Heart left ventricle (tissue), 16 donors: ENCODE measurements at regions of chr6 and their contacts with region 1.

Region 1: GRCh38 chr6:6494677-6495076 is 93.8 kb upstream of the LY86 start:
- DNase-seq: peak; percentile 44 to 77 (median 56)
- ATAC-seq: peak; percentile 55 to 82 (median 72)
- H3K4me3 ChIP-seq: no peak overlapping the region
- H3K27ac ChIP-seq: no peak overlapping the region
- H3K4me1 ChIP-seq: no peaks in the 10 kb centered on the region
- H3K27me3 ChIP-seq: peaks cover 0 to under 1% (median 0%) of the 10 kb centered on the region in 9 donors
- CTCF ChIP-seq: peak; percentile 41 to 67 (median 56)
- POLR2A ChIP-seq: no peak

Region 2: DNA sequence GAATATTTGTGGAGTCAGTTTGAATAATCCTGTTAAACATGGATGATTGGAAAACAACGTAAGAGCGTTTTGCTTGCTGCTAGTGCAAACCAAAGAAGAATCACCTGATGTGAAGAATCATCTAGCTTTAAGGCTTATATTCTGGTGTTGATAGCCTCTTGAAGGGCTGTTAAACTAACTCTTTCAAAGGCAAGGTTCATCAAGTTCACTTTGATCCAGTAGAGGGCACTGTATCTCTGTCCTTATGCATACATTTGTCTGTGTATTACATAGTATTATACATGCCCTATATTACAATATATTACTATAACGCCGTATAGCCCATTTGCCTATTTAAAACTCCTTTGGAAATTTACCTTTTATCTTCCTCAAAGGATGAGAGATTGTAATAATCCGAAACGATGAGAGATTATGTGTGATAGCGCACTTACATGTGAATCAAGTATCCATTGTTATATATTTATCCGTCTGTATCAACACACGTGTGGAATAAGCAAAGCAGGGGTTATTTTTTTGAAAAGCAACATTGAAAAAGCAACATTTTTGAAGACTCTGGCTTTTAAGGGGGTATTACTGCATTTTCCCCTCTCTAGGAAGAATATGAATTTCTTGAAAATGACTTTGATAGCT is 437.1 kb before region 1 on chr6:
- intact Hi-C with region 1: loop called (anchors 1 to 10 kb)
- DNase-seq: no peak
- ATAC-seq: peak in 3 of 4 donors; percentile 51 to 62 (median 61)
- H3K4me3 ChIP-seq: no peak overlapping the region
- H3K27ac ChIP-seq: no peak overlapping the region
- H3K4me1 ChIP-seq: no peaks in the 10 kb centered on the region
- H3K27me3 ChIP-seq: peaks cover 0 to 9% (median 0%) of the 10 kb centered on the region in 9 donors
- CTCF ChIP-seq: peak; percentile 51 to 79 (median 67)
- POLR2A ChIP-seq: no peak

Region 3: GRCh38 chr6:6331946-6332601 is 162.6 kb before region 1 on chr6:
- intact Hi-C with region 1: loop called in 1 of 10 experiments (anchors 5 kb)
- DNase-seq: no peak
- ATAC-seq: peak in 3 of 4 donors; percentile 45 to 58 (median 55)
- H3K4me3 ChIP-seq: no peak overlapping the region
- H3K27ac ChIP-seq: peak overlapping the region in 6 of 12 donors; percentile 31 to 92 (median 46)
- H3K4me1 ChIP-seq: peaks cover 0 to 56% (median 13%) of the 10 kb centered on the region in 12 donors
- H3K27me3 ChIP-seq: no peaks in the 10 kb centered on the region
- CTCF ChIP-seq: no peak
- POLR2A ChIP-seq: no peak

Region 4: GRCh38 chr6:6547110-6547879 is 52.6 kb after region 1 on chr6:
- intact Hi-C with region 1: loop called in 1 of 10 experiments (anchors 2 kb)
- DNase-seq: peak; percentile 84 to 90 (median 89)
- ATAC-seq: peak; percentile 95 to 97 (median 96)
- H3K4me3 ChIP-seq: peak overlapping the region; percentile 30 to 58 (median 52)
- H3K27ac ChIP-seq: peak overlapping the region in 5 of 12 donors; percentile 17 to 61 (median 47)
- H3K4me1 ChIP-seq: peaks cover 2 to 23% (median 9%) of the 10 kb centered on the region in 12 donors
- H3K27me3 ChIP-seq: peaks cover 0 to 19% (median 0%) of the 10 kb centered on the region in 9 donors
- CTCF ChIP-seq: peak; percentile 91 to 98 (median 96)
- POLR2A ChIP-seq: no peak